ENCODE measurements at regions of chr16 and their contacts with region 1.

Region 1: GRCh38 chr16:78932355-78932943 is 668.1 kb downstream of the MAF start:
- DNase-seq: no peak
- H3K27ac ChIP-seq: no peak overlapping the region
- CTCF ChIP-seq: no peak

Region 2: GRCh38 chr16:78437352-78437968 is 495.0 kb before region 1 on chr16:
- CTCF ChIA-PET with region 1: interaction called, 11 read pairs
- POLR2A ChIA-PET with region 1: no interaction called
- DNase-seq: peak; percentile 11
- H3K27ac ChIP-seq: no peak overlapping the region
- CTCF ChIP-seq: peak; percentile 51

Region 3: GRCh38 chr16:78957326-78958100 is 25.1 kb after region 1 on chr16:
- CTCF ChIA-PET with region 1: no interaction called
- POLR2A ChIA-PET with region 1: no interaction called
- DNase-seq: no peak
- H3K27ac ChIP-seq: no peak overlapping the region
- CTCF ChIP-seq: no peak

Measured in RWPE1 (cell line).